Thyroid gland (tissue), 4 donors: ENCODE measurements at regions of chr1 and their contacts with region 1.

Region 1: GRCh38 chr1:84753516-84754385 is 63.5 kb upstream of the SSX2IP start:
- DNase-seq: peak; percentile 70 to 72
- H3K4me3 ChIP-seq: no peak overlapping the region
- H3K27ac ChIP-seq: no peak overlapping the region
- H3K4me1 ChIP-seq: no peaks in the 10 kb centered on the region
- H3K27me3 ChIP-seq: no peaks in the 10 kb centered on the region
- CTCF ChIP-seq: peak; percentile 83 to 95 (median 90)
- POLR2A ChIP-seq: no peak

Region 2: GRCh38 chr1:84133479-84133878 is 620.3 kb before region 1 on chr1:
- intact Hi-C with region 1: loop called (anchors 10 kb)
- DNase-seq: no peak
- H3K4me3 ChIP-seq: no peak overlapping the region
- H3K27ac ChIP-seq: no peak overlapping the region
- H3K4me1 ChIP-seq: no peaks in the 10 kb centered on the region
- H3K27me3 ChIP-seq: no peaks in the 10 kb centered on the region
- CTCF ChIP-seq: no peak
- POLR2A ChIP-seq: no peak